ENCODE measurements at regions of chr7 and their contacts with region 1.

Region 1: DNA sequence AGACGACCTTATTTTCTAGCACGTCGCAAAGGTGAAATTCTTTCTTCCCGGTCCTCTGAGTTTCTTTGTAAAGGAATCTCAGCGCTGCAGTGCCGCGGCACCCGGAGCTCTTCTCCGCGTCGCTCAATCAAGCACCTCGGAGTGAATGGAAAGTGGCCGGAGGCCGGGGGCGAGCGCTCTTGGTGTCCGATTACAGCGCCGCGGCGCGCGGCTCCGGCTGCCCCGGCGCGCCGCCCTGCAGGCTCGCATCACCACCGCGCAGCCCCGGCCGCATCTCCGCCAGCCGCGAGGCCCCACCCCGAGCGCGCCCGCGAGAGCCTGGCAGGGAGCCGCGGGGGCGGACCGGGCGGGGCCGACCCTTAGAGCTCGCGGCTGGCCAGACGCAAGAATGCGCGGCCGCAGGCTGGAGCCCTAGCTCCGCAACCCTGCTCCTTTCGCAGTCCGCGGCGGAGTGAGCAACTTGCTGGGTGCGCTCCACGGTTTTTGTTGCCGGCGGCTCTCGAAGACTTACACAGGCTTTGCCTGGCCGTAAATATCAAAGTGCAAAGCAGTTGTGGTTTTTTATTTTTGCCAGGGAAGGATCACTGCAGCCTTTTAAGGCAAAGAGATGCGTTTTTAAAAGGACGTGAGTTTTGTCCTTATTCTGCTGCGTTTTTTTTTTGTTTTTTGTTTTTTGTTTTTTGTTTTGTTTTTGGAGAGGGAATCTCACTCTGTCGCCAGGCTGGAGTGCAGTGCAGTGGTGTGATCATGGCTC is at the start of gene SEMA3C:
- DNase-seq: peak; percentile 99
- H3K4me3 ChIP-seq: peak within 1 kb of the TSS; percentile 83 to 96
- H3K27ac ChIP-seq: peak within 1 kb of the TSS; percentile 62 to 91
- H3K4me1 ChIP-seq: peaks cover 10 to 12% of the 10 kb centered on the region in 2 experiments; a peak in 2 of 4 replicates
- H3K27me3 ChIP-seq: no peaks in the 10 kb centered on the region
- CTCF ChIP-seq: peak; percentile 16; the same call in 1 of the 2 replicates
- EP300 ChIP-seq: peak in 1 of 2 experiments; percentile 60; a peak in 2 of 4 replicates
- RAD21 ChIP-seq: peak; percentile 53
- polyA plus RNA-seq, gene SEMA3C: 51.1 and 64.1 TPM in 2 replicates

Region 2: DNA sequence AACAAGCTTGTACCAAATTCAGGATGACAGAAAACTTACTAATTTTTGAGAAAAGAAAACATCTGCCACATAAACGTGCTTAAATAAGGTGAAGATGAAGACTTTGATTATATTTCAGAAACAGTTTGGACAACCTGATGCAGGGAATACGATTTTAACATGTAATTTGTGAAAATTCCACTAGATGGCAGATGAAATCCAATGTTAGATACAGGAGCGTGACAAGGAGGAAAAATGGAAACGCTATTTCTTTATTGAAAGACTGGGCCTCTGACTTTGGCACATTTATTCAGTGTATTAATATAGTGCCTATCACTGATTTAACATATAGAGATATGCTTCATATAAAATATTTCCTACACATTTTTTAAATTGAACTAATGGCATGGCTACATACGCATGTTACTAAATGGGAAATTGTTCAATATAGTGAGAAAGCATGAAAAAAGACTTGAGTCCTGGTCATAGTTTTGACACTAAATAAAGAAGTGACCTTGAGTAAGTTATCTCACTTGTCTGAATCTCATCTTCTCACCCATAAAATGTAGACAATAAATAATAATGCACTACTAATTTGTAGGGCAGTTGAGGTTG is 219.9 kb before region 1 on chr7:
- CTCF ChIA-PET with region 1: interaction called, 15 read pairs
- POLR2A ChIA-PET with region 1: no interaction called
- DNase-seq: peak; percentile 36
- H3K4me3 ChIP-seq: no peak overlapping the region
- H3K27ac ChIP-seq: no peak overlapping the region
- H3K4me1 ChIP-seq: peaks cover 8 to 16% of the 10 kb centered on the region in 2 experiments; a peak in 3 of 4 replicates
- H3K27me3 ChIP-seq: no peaks in the 10 kb centered on the region
- CTCF ChIP-seq: peak; percentile 91
- EP300 ChIP-seq: no peak
- RAD21 ChIP-seq: peak; percentile 99

Region 3: DNA sequence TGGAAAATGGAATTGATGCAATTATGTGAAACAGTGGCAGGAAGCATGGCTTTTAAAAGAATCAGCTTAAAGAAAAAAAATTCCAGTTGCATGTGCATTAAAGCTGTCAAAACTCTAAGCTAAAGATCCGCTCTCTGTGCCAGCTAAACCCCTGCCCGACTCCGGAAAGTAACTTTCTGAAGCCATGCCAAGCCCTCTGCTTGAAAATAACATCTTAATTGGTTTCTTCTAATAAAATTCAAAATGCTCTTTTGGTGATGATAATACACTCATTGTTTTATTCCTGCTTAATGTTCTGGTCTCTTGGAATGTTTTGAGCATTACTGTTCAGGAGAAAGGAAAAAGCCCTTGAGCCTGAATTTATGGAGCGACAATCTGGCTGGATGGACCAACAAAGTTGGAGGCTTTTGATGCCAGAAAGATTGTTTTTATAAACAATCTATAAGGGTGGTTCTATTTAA is 11.9 kb before region 1 on chr7:
- CTCF ChIA-PET with region 1: interaction called, 16 read pairs
- POLR2A ChIA-PET with region 1: interaction called, 8 read pairs
- DNase-seq: peak; percentile 66
- H3K4me3 ChIP-seq: peak overlapping the region; percentile 2 to 31; a peak in 3 of 4 replicates
- H3K27ac ChIP-seq: peak overlapping the region; percentile 69 to 97
- H3K4me1 ChIP-seq: peaks cover 24 to 54% of the 10 kb centered on the region in 2 experiments
- H3K27me3 ChIP-seq: no peaks in the 10 kb centered on the region
- CTCF ChIP-seq: no peak
- EP300 ChIP-seq: peak; percentile 91 to 96
- RAD21 ChIP-seq: peak; percentile 22; the same call in 1 of the 2 replicates

Region 4: GRCh38 chr7:80941208-80941758 is 22.2 kb after region 1 on chr7:
- CTCF ChIA-PET with region 1: interaction called, 11 read pairs
- POLR2A ChIA-PET with region 1: no interaction called
- DNase-seq: no peak
- H3K4me3 ChIP-seq: no peak overlapping the region
- H3K27ac ChIP-seq: peak overlapping the region; percentile 79 to 87; a peak in 3 of 4 replicates
- H3K4me1 ChIP-seq: peaks cover 3 to 18% of the 10 kb centered on the region in 2 experiments; a peak in 3 of 4 replicates
- H3K27me3 ChIP-seq: no peaks in the 10 kb centered on the region
- CTCF ChIP-seq: no peak
- EP300 ChIP-seq: peak in 1 of 2 experiments; percentile 59; a peak in 2 of 4 replicates
- RAD21 ChIP-seq: no peak

Region 5: GRCh38 chr7:80984619-80985018 is 65.5 kb after region 1 on chr7:
- CTCF ChIA-PET with region 1: no interaction called
- POLR2A ChIA-PET with region 1: no interaction called
- DNase-seq: no peak
- H3K4me3 ChIP-seq: no peak overlapping the region
- H3K27ac ChIP-seq: no peak overlapping the region
- H3K4me1 ChIP-seq: no peaks in the 10 kb centered on the region
- H3K27me3 ChIP-seq: no peaks in the 10 kb centered on the region
- CTCF ChIP-seq: no peak
- EP300 ChIP-seq: no peak
- RAD21 ChIP-seq: no peak

Region 6: DNA sequence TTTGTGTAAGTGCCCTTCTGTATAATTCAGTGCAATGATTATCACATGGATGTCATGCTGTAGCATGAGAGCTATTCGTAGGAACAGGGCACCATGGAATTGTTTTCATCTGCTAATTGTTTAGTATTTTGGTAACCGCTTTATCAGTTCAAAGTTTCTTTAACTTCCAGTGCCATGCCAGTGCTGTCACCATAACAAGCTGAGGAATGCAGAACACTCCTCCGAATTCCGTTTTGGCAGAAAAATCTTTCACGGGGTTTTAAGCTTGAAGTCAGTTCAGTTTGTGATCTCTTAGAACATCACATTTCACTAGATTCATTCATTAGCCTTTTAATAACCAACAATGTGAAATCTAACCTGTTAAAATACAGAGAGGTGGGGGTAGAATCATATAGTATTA is 117.0 kb after region 1 on chr7:
- CTCF ChIA-PET with region 1: no interaction called
- POLR2A ChIA-PET with region 1: no interaction called
- DNase-seq: no peak
- H3K4me3 ChIP-seq: no peak overlapping the region
- H3K27ac ChIP-seq: no peak overlapping the region
- H3K4me1 ChIP-seq: no peaks in the 10 kb centered on the region
- H3K27me3 ChIP-seq: no peaks in the 10 kb centered on the region
- CTCF ChIP-seq: no peak
- EP300 ChIP-seq: no peak
- RAD21 ChIP-seq: no peak

Region 7: DNA sequence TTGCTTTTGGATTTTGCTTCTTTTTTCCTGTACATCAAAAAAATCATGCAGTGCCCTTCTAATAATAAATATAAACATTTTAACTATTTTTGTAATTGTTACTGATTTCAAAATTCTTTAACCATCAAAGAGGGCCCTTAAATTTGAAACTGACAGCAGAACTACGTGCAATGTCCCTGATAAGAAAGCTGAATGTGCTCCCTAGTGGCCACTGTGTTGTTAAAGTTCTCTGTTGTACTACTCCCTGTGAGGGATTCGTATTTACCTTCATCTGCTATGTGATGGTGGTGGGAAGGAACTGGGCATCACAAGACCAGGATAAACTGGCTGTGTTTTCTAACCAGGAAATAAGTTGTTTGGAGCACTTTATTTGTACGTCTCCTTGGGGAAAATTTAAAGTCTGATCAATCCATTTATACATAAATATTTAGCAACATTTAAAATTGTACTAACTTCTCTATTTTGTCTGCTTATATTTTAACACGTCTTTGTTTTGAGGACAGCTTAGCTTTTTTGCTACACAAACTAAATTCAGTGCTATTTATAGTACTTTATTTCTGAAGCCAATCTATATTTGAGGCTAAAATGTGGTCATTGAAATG is 528.4 kb after region 1 on chr7:
- CTCF ChIA-PET with region 1: interaction called, 25 read pairs
- POLR2A ChIA-PET with region 1: no interaction called
- DNase-seq: peak; percentile 50
- H3K4me3 ChIP-seq: no peak overlapping the region
- H3K27ac ChIP-seq: no peak overlapping the region
- H3K4me1 ChIP-seq: no peaks in the 10 kb centered on the region; a peak in 1 of 4 replicates
- H3K27me3 ChIP-seq: no peaks in the 10 kb centered on the region
- CTCF ChIP-seq: peak; percentile 79
- EP300 ChIP-seq: no peak
- RAD21 ChIP-seq: peak; percentile 97

Region 8: GRCh38 chr7:81457852-81458522 is 538.9 kb after region 1 on chr7:
- CTCF ChIA-PET with region 1: interaction called, 32 read pairs
- POLR2A ChIA-PET with region 1: no interaction called
- DNase-seq: no peak
- H3K4me3 ChIP-seq: no peak overlapping the region
- H3K27ac ChIP-seq: no peak overlapping the region
- H3K4me1 ChIP-seq: peaks cover 0 to 17% of the 10 kb centered on the region in 2 experiments; a peak in 2 of 4 replicates
- H3K27me3 ChIP-seq: no peaks in the 10 kb centered on the region
- CTCF ChIP-seq: peak; percentile 74
- EP300 ChIP-seq: no peak
- RAD21 ChIP-seq: peak; percentile 81

Measured in SK-N-SH (cell line).